ENCODE measurements at regions of chr18 and their contacts with region 1.

Region 1: GRCh38 chr18:2337552-2338141 is 233.7 kb downstream of the METTL4 start:
- DNase-seq: peak; percentile 70
- ATAC-seq: peak; percentile 74
- H3K4me3 Mint-ChIP-seq: no peak overlapping the region
- H3K27ac Mint-ChIP-seq: no peak overlapping the region
- H3K4me1 Mint-ChIP-seq: peaks cover 6% of the 10 kb centered on the region
- H3K27me3 Mint-ChIP-seq: peaks cover 10% of the 10 kb centered on the region
- CTCF ChIP-seq: peak; percentile 78

Region 2: GRCh38 chr18:2281523-2282199 is 56.0 kb before region 1 on chr18:
- CTCF ChIA-PET with region 1: no interaction called
- POLR2A ChIA-PET with region 1: no interaction called
- intact Hi-C with region 1: no loop called
- DNase-seq: no peak
- ATAC-seq: no peak
- H3K4me3 Mint-ChIP-seq: no peak overlapping the region
- H3K27ac Mint-ChIP-seq: no peak overlapping the region
- H3K4me1 Mint-ChIP-seq: no peaks in the 10 kb centered on the region
- H3K27me3 Mint-ChIP-seq: no peaks in the 10 kb centered on the region
- CTCF ChIP-seq: no peak

Region 3: DNA sequence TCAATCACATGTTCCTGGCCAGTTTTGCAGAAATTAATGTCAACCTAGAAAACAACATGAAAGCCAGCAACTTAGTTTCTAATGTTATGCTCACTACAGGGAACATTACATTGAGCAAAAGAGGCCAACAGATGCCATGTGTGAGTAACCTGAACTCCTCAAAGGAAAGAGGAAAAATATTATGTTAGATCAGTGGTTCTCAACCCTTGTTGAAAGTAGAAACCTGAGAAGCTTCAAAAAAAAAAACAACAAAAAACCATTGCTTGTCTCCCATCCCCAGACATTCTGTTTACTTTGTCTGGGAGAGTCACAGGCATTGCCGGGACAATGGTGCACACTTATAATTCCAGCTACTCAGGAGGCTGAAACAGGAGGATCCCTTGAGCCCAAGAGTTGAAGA is 176.0 kb after region 1 on chr18:
- CTCF ChIA-PET with region 1: no interaction called
- POLR2A ChIA-PET with region 1: no interaction called
- intact Hi-C with region 1: no loop called
- DNase-seq: no peak
- ATAC-seq: no peak
- H3K4me3 Mint-ChIP-seq: no peak overlapping the region
- H3K27ac Mint-ChIP-seq: no peak overlapping the region
- H3K4me1 Mint-ChIP-seq: peaks cover 16% of the 10 kb centered on the region
- H3K27me3 Mint-ChIP-seq: no peaks in the 10 kb centered on the region
- CTCF ChIP-seq: no peak

Region 4: DNA sequence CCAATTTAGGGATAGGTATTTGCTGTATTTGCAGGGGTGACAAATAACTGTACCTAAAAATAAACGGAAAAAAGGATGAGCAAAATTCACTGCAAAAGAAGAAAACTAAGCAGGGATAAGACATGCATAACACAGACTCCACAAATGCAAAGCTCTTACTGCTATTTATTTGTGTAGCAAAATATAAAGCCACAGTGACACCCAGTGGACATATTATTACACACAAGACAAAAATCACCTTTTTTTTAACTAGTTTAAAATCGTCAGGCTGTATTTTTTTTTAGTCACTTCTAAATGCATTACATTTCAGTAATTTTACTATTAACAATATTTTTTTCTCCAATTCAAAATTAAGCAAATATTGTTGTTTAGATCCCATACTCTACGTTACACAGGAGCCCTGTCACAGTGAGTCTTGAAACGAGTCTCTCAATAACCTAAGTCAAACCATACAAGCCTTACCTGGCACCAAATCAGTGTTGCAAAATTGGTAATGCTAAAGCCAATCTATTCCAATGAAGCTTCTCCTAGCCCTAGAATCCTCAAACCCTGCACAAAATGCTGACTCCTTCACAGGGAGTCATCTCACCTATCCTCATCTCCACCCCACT is 209.9 kb after region 1 on chr18:
- CTCF ChIA-PET with region 1: interaction called, 23 read pairs
- POLR2A ChIA-PET with region 1: no interaction called
- intact Hi-C with region 1: loop called (anchors 5 kb)
- DNase-seq: no peak
- ATAC-seq: peak; percentile 47
- H3K4me3 Mint-ChIP-seq: no peak overlapping the region
- H3K27ac Mint-ChIP-seq: no peak overlapping the region
- H3K4me1 Mint-ChIP-seq: peaks cover 3% of the 10 kb centered on the region
- H3K27me3 Mint-ChIP-seq: no peaks in the 10 kb centered on the region
- CTCF ChIP-seq: peak; percentile 81

Measured in activated CD8-positive, alpha-beta T cell treated with anti-CD3 and anti-CD28 coated beads for 36 hours (primary cell).